Heart right ventricle (tissue), 16 donors: ENCODE measurements at regions of chr7 and their contacts with region 1.

Region 1: GRCh38 chr7:73501349-73501748 is 20.7 kb downstream of the BAZ1B start:
- DNase-seq: no peak
- ATAC-seq: no peak
- H3K4me3 ChIP-seq: no peak overlapping the region
- H3K27ac ChIP-seq: no peak overlapping the region
- H3K4me1 ChIP-seq: peaks cover 0 to 8% (median 0%) of the 10 kb centered on the region in 9 donors
- H3K27me3 ChIP-seq: no peaks in the 10 kb centered on the region
- CTCF ChIP-seq: no peak

Region 2: GRCh38 chr7:73477376-73477775 is 24.0 kb before region 1 on chr7:
- intact Hi-C with region 1: loop called in 1 of 10 experiments (anchors 2 kb)
- DNase-seq: no peak
- ATAC-seq: no peak
- H3K4me3 ChIP-seq: no peak overlapping the region
- H3K27ac ChIP-seq: no peak overlapping the region
- H3K4me1 ChIP-seq: peaks cover 0 to under 1% (median 0%) of the 10 kb centered on the region in 9 donors
- H3K27me3 ChIP-seq: no peaks in the 10 kb centered on the region
- CTCF ChIP-seq: no peak

Region 3: DNA sequence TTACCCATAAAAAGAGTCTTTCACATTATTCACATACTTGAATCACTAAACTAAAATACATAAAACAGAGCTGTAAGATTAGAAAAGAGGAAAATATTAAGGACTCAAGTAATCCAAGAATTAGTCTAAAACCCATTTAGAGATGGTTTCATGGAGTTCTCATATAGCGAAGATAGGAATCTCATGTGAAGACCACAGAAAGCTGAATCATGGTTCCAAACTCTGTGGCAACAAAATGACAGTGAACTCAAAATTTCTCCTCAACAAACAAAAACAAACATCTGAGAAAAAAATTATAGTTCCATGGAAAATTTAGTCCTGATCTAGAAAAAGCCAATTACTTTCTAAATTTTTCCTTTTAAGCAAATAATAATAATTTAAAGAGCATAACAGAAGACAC is 13.9 kb before region 1 on chr7:
- intact Hi-C with region 1: no loop called
- DNase-seq: no peak
- ATAC-seq: no peak
- H3K4me3 ChIP-seq: no peak overlapping the region
- H3K27ac ChIP-seq: no peak overlapping the region
- H3K4me1 ChIP-seq: peaks cover 0 to 10% (median 3%) of the 10 kb centered on the region in 9 donors
- H3K27me3 ChIP-seq: no peaks in the 10 kb centered on the region
- CTCF ChIP-seq: no peak